ENCODE measurements at regions of chr9 and their contacts with region 1.

Region 1: DNA sequence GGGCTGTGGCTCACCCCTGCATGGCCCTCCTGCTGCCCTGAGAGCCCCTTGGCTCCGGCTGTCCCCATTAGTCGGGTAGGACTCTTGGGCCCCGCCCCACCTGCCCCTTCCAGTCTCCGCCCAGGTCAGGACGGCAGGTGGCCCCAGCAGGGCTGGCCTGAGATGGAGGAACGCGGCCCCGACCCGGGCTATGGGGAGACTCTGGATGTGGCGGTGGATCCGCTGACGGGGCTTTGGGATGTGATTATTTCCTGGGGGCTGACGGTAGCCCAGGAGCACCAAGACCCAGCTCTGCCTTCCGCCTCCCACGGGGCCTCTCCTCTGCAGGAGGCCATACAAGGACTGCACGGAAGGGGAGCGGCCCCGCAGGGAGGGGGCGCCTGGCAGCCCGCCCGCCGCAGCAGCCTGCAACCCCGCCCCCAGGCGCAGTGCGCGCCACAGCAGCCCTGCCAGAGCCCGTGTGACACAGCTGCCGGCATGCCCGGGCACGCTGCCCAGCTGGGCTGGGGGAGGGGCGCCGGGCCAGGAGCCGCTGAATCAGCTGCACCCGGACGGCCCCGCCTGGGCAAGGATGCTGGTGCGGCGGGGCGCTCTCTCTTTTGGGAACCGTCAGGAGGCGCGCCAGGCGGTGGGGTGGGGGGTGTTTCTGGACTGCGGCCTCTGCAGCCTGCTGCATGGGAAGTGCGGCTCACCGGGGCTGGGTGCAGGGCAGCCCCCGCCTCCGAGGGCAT is 9.2 kb downstream of the TMEM250 start:
- DNase-seq: peak; percentile 44
- H3K4me3 ChIP-seq: no peak overlapping the region
- CTCF ChIP-seq: peak; percentile 3

Region 2: GRCh38 chr9:136036050-136036449 is 73.5 kb before region 1 on chr9:
- in situ Hi-C with region 1: loop called (anchors 5 kb)
- DNase-seq: no peak
- H3K4me3 ChIP-seq: no peak overlapping the region
- CTCF ChIP-seq: no peak

Region 3: DNA sequence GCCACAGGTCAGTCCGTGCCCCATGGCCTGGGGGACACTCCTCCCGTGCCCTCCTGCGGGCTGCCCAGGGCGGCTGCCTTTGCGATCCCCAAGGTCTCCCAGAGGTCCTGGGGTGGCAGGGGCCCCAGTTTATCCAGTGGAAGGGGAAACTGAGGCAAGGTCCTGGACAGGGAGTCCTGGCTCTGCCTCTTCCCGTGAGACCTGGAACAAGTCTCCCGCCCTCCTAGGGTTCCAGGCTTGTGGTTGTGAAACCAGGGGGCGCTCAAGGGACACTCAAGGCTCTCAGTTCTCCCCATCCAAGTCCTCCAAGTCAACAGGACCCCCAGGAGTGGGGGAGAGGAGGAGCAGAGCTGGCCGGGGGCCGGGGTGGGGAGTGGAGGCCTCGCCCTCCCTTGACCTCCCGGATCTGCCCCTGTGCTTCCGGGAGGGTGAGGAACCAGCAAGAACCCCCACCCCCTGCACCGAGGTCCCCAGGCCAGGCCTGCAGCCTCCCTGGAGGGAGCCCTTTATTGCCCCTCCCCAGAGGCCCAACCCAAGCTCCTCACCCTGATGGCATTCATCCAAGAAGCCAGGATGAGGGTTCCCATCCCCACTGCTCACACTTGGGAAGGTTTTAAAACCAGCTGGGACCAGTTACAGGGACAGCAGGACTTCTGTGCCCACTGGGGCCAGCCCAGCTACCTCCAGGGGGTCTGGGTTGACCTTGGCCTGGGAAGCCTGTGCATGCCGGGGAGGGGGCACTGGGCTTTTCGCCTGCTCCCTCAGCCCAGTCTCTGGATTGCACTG is 33.9 kb after region 1 on chr9:
- in situ Hi-C with region 1: no loop called
- DNase-seq: no peak
- H3K4me3 ChIP-seq: no peak overlapping the region
- CTCF ChIP-seq: peak; percentile 38

Measured in astrocyte of the cerebellum (primary cell).